Activated B cell treated with CpG ODN at 0.5 μM for 24 hours (primary cell): ENCODE measurements at regions of chr14 and their contacts with region 1.

Region 1: DNA sequence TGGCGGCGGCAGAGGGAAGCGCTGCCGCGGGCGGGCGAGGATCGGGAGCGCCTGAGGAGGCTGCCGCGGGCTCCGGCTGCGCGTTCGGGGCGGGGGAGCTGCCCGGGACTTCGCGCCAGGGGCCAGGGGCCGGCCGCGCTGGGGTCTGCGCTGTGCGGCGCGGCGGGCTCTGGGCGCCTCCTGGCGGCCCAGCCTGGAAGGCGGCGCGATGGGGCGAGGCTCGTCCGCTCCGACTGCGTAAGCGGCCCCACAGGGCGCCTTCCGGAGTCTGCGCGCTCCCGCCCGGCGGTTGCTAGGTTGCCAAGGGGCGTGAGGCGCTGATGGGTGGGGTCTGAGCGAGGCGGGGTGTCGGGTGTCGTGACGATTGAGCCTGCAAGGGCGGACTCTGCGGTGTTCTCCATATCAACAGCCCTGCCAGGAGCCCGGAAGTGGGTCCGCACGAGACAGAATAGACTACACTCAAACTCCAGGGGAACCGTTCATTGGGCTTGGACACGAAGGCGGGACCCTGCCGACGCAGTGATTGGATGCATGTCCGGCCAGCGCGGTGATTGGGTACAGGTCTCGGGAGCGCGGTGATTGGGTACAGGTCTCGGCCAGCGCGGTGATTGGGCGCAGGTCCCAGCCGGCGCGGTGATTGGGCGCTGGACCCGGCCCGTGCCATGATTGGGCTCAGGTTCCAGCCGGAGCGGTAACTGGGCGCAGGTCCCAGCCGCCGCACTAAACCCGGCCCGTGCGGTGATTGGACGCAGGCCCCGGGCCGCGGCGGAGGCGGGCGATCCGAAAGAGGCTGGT is at the start of gene TEDC1:
- DNase-seq: peak; percentile 96
- ATAC-seq: peak; percentile 73
- H3K4me3 Mint-ChIP-seq: peak within 1 kb of the TSS; percentile 87
- H3K27ac Mint-ChIP-seq: peak within 1 kb of the TSS; percentile 97
- H3K4me1 Mint-ChIP-seq: peaks cover 33% of the 10 kb centered on the region
- H3K27me3 Mint-ChIP-seq: no peaks in the 10 kb centered on the region
- CTCF ChIP-seq: peak; percentile 57
- total RNA-seq, gene TEDC1: 16.7 and 18.1 TPM in 2 replicates

Region 2: DNA sequence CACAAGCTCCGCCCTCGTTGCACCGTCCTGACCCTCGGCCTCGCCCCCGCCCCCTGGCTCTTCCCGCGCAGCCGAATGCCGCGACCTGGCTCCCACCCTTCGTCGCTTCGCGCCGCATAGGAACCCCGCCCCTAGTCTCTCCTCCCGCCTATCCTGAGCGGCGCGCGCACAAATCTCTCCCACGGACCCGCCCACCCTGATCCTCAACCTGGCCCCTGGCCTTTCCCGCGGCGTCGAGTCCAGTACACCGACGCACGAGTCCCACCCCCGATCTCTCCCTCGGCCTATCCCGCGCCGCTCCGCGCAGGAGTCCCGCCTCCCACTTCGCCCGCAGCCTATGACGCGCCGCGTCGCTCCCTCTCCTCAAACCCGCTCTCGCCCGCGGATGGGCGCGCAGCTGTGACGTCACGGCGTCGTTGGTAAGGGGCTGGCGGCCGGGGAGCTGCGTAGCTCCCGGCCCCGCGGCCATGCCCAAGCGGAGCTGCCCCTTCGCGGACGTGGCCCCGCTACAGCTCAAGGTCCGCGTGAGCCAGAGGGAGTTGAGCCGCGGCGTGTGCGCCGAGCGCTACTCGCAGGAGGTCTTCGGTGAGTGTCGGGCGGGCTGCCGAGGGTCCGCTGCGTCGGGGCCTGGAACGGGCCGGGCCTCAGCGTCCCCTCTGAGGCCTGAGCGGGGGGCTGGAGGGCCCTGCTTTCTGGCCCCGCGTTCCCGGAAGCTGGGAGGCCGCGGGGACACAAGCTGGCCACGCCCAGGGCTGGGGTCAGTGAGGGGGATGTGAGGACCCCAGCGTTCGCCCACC is 737.8 kb before region 1 on chr14 and contains the start of gene SIVA1:
- CTCF ChIA-PET with region 1: no interaction called
- POLR2A ChIA-PET with region 1: no interaction called
- intact Hi-C with region 1: loop called (anchors 2 kb)
- DNase-seq: peak; percentile 98
- ATAC-seq: peak; percentile 89
- H3K4me3 Mint-ChIP-seq: peak within 1 kb of the TSS; percentile 88
- H3K27ac Mint-ChIP-seq: peak within 1 kb of the TSS; percentile 84
- H3K4me1 Mint-ChIP-seq: peaks cover 34% of the 10 kb centered on the region
- H3K27me3 Mint-ChIP-seq: no peaks in the 10 kb centered on the region
- CTCF ChIP-seq: no peak
- total RNA-seq, gene SIVA1: 47.9 and 51.2 TPM in 2 replicates

Region 3: DNA sequence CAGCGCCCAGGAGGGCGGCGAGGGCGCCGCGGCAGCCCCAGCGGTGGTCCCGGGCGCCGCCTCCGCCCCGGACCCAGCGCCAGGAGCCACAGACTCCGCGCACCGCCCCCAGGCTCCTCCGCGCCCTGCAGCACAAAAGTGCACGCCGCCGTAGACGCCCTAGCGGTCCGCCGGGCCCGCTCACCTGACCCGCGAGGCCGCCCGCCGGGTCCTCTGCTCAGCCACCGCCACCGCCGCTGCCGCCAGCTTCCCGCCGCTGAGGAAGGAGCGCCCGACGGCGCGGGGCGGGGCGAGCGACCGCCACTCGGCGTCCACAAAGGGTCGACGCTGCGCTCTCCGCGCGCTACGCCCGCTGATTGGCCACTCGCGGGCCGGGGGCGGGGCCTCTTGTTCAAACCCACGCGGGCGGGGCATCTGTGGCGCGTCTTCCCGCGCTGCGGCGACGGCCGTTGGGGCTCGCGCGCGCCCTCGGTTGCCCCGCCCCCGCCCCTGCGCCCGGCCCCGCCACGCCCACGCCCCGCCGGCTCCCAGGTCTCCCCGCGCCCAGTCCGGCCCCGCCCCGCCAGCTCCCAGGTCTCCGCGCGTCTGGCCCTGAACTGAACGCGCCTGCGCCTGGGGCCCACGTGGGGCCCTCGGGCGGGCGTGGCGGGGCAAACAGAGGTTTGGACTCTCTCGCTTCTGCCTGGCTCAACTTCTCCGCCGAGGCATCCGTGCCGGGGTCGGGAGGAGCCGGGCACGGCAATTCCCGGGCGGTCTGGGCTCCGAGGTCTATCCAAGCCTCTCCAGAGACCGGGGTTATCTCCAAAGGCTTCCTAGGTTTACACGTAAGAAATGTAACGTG is 469.7 kb before region 1 on chr14 and contains the start of gene CDCA4:
- CTCF ChIA-PET with region 1: no interaction called
- POLR2A ChIA-PET with region 1: no interaction called
- intact Hi-C with region 1: loop called (anchors 2 kb)
- DNase-seq: peak; percentile 97
- ATAC-seq: peak; percentile 84
- H3K4me3 Mint-ChIP-seq: peak within 1 kb of the TSS; percentile 92
- H3K27ac Mint-ChIP-seq: peak within 1 kb of the TSS; percentile 94
- H3K4me1 Mint-ChIP-seq: peaks cover 62% of the 10 kb centered on the region
- H3K27me3 Mint-ChIP-seq: no peaks in the 10 kb centered on the region
- CTCF ChIP-seq: no peak
- total RNA-seq, gene CDCA4: 11.7 and 13.6 TPM in 2 replicates

Region 4: DNA sequence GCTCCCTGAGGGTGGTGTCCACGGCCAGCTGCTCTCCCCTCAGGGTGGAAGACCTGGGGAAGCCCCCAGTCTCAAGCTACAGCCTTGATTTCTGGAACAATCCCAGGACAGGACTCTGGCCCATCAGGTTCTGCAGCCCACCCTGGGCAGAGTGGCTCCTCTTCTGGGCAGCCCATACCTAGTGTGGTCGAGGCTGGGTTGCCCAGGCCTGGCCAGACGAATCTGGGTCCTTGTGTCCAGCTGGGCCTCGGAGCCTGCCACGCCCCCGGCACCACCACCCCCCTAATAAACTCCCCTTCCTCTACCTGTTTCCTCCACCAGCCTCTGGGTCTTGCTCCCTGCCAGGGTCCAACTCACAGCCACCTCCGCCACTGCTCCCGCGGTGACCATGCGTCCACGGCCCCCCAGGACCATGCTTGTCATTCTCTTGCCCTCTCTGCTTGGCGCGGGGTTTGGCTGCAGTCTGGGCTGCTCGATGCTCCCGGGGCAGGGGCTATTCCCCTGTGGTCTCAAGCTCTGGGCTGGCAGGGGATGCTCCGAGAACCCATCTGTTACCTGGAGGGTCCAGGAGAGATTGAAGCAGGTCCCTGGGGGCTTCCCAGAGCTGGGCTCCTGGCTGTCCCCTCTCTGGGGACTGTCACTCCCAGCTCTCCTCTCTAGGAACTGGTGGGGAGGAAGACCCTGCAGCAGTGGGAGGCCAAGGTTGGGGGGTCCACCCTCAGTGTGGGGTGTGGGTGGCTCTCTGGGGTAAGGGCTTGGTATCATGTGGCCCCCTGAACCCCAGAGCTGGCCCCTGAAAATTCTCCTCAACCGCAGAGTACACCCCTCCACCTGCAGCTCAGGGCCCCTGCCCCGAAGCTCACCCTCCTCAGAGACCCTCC is 416.8 kb before region 1 on chr14:
- CTCF ChIA-PET with region 1: no interaction called
- POLR2A ChIA-PET with region 1: no interaction called
- intact Hi-C with region 1: no loop called
- DNase-seq: no peak
- ATAC-seq: no peak
- H3K4me3 Mint-ChIP-seq: no peak overlapping the region
- H3K27ac Mint-ChIP-seq: no peak overlapping the region
- H3K4me1 Mint-ChIP-seq: peaks cover 65% of the 10 kb centered on the region
- H3K27me3 Mint-ChIP-seq: no peaks in the 10 kb centered on the region
- CTCF ChIP-seq: no peak

Region 5: GRCh38 chr14:105203057-105203531 is 287.7 kb before region 1 on chr14:
- CTCF ChIA-PET with region 1: interaction called, 4 read pairs
- POLR2A ChIA-PET with region 1: no interaction called
- intact Hi-C with region 1: loop called (anchors 2 kb)
- DNase-seq: peak; percentile 69
- ATAC-seq: peak; percentile 54
- H3K4me3 Mint-ChIP-seq: no peak overlapping the region
- H3K27ac Mint-ChIP-seq: no peak overlapping the region
- H3K4me1 Mint-ChIP-seq: peaks cover 15% of the 10 kb centered on the region
- H3K27me3 Mint-ChIP-seq: peaks cover 23% of the 10 kb centered on the region
- CTCF ChIP-seq: peak; percentile 76

Region 6: DNA sequence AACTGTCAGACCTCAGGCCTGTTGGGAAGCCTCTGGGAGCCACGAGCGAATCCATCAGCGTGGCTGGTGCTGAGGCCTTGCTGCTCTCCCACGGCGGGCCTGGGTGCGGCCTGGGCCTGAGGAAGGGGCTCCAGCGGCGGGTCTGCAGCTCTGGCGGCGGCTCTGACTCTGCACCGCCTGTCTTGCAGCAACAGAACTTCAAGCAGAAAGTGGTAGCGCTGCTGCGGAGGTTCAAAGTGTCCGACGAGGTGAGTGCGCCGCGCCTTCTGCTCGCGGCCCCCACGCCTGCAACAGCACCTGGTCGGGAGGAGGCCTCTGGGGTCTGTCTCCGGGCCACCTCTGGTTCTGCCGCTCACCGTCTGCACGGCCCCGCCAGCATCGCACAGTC is 121.1 kb before region 1 on chr14:
- CTCF ChIA-PET with region 1: interaction called, 104 read pairs
- POLR2A ChIA-PET with region 1: interaction called, 18 read pairs
- intact Hi-C with region 1: loop called (anchors 1 kb)
- DNase-seq: no peak
- ATAC-seq: no peak
- H3K4me3 Mint-ChIP-seq: no peak overlapping the region
- H3K27ac Mint-ChIP-seq: no peak overlapping the region
- H3K4me1 Mint-ChIP-seq: peaks cover 7% of the 10 kb centered on the region
- H3K27me3 Mint-ChIP-seq: no peaks in the 10 kb centered on the region
- CTCF ChIP-seq: no peak

Region 7: GRCh38 chr14:105414456-105415371 is 76.1 kb before region 1 on chr14:
- CTCF ChIA-PET with region 1: interaction called, 5 read pairs
- POLR2A ChIA-PET with region 1: interaction called, 3 read pairs
- intact Hi-C with region 1: loop called (anchors 2 kb)
- DNase-seq: peak; percentile 65
- ATAC-seq: peak; percentile 80
- H3K4me3 Mint-ChIP-seq: peak overlapping the region; percentile 68
- H3K27ac Mint-ChIP-seq: no peak overlapping the region
- H3K4me1 Mint-ChIP-seq: peaks cover 14% of the 10 kb centered on the region
- H3K27me3 Mint-ChIP-seq: peaks cover 12% of the 10 kb centered on the region
- CTCF ChIP-seq: no peak

Region 8: GRCh38 chr14:105527661-105528581 is 37.2 kb after region 1 on chr14:
- CTCF ChIA-PET with region 1: interaction called, 15 read pairs
- POLR2A ChIA-PET with region 1: interaction called, 5 read pairs
- intact Hi-C with region 1: loop called (anchors 1 kb)
- DNase-seq: peak; percentile 82
- ATAC-seq: peak; percentile 47
- H3K4me3 Mint-ChIP-seq: peak overlapping the region; percentile 68
- H3K27ac Mint-ChIP-seq: no peak overlapping the region
- H3K4me1 Mint-ChIP-seq: peaks cover 44% of the 10 kb centered on the region
- H3K27me3 Mint-ChIP-seq: peaks cover 4% of the 10 kb centered on the region
- CTCF ChIP-seq: no peak